ENCODE measurements at regions of chr10 and their contacts with region 1.

Region 1: GRCh38 chr10:62050893-62051433 is 149.5 kb downstream of the ARID5B start:
- DNase-seq: peak; percentile 70
- ATAC-seq: no peak
- H3K4me3 ChIP-seq: peak overlapping the region; percentile 69 to 81 (median 71)
- H3K27ac ChIP-seq: peak overlapping the region; percentile 89
- H3K4me1 ChIP-seq: peaks cover 86% of the 10 kb centered on the region
- H3K27me3 ChIP-seq: no peaks in the 10 kb centered on the region; a peak in 1 of 5 replicates
- CTCF ChIP-seq: no peak
- EP300 ChIP-seq: no peak
- POLR2A ChIP-seq: no peak
- RAD21 ChIP-seq: no peak

Region 2: GRCh38 chr10:61903221-61903927 is 147.6 kb before region 1 on chr10:
- CTCF ChIA-PET with region 1: no interaction called
- POLR2A ChIA-PET with region 1: interaction called, 12 read pairs
- in situ Hi-C with region 1: loop called (anchors 5 kb)
- intact Hi-C with region 1: no loop called
- DNase-seq: peak; percentile 38
- ATAC-seq: peak; percentile 89
- H3K4me3 ChIP-seq: peak overlapping the region; percentile 93 to 96 (median 94)
- H3K27ac ChIP-seq: peak overlapping the region; percentile 94
- H3K4me1 ChIP-seq: peaks cover 51% of the 10 kb centered on the region
- H3K27me3 ChIP-seq: no peaks in the 10 kb centered on the region; a peak in 1 of 5 replicates
- CTCF ChIP-seq: peak; percentile 36; the same call in 1 of the 2 replicates
- EP300 ChIP-seq: no peak
- POLR2A ChIP-seq: peak; percentile 39 to 47; a peak in 2 of 4 replicates
- RAD21 ChIP-seq: peak; percentile 45; the same call in 1 of the 2 replicates

Region 3: GRCh38 chr10:61961278-61961677 is 89.7 kb before region 1 on chr10:
- CTCF ChIA-PET with region 1: no interaction called
- POLR2A ChIA-PET with region 1: interaction called, 10 read pairs
- in situ Hi-C with region 1: no loop called
- intact Hi-C with region 1: loop called (anchors 1 kb)
- DNase-seq: no peak
- ATAC-seq: no peak
- H3K4me3 ChIP-seq: no peak overlapping the region
- H3K27ac ChIP-seq: no peak overlapping the region
- H3K4me1 ChIP-seq: peaks cover 50% of the 10 kb centered on the region
- H3K27me3 ChIP-seq: no peaks in the 10 kb centered on the region
- CTCF ChIP-seq: no peak
- EP300 ChIP-seq: no peak
- POLR2A ChIP-seq: no peak
- RAD21 ChIP-seq: no peak

Region 4: DNA sequence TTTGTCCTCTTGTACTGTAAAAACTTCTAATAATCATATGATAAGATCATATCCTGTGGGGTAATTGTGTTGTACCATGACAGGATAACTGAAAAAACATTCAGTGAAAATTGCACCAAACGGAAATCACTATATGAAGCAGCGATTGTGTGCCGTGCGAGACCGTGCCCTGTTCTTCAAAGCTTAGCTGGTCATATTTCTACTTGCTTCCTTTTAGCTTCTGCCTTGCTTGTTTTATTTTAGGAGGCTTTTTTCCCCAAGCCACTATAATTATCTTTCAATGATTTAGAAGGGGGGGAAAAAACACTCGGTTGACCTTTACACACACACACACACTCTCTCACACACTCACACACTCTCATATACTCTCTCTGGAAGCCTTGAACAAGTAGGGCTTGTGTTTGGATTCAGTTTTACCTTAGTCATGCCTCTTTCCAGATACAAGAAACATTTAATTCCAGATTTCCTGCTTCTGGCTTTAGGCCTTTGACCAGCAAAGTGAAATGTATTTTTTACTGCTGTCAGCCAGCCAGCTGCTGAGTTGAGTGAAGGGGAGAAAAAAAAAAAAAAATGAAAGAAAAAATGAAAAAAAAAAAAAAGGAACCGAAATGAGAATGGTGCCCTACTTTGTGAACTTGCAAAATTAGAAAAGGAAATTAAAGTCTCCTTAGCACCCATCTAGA is 31.9 kb after region 1 on chr10:
- CTCF ChIA-PET with region 1: no interaction called
- POLR2A ChIA-PET with region 1: interaction called, 6 read pairs
- in situ Hi-C with region 1: no loop called
- intact Hi-C with region 1: loop called (anchors 2 kb)
- DNase-seq: peak; percentile 56
- ATAC-seq: peak; percentile 57
- H3K4me3 ChIP-seq: no peak overlapping the region
- H3K27ac ChIP-seq: peak overlapping the region; percentile 74
- H3K4me1 ChIP-seq: peaks cover 51% of the 10 kb centered on the region
- H3K27me3 ChIP-seq: no peaks in the 10 kb centered on the region
- CTCF ChIP-seq: no peak
- EP300 ChIP-seq: peak in 1 of 2 experiments; percentile 2; a peak in 1 of 4 replicates
- POLR2A ChIP-seq: no peak
- RAD21 ChIP-seq: no peak

Region 5: DNA sequence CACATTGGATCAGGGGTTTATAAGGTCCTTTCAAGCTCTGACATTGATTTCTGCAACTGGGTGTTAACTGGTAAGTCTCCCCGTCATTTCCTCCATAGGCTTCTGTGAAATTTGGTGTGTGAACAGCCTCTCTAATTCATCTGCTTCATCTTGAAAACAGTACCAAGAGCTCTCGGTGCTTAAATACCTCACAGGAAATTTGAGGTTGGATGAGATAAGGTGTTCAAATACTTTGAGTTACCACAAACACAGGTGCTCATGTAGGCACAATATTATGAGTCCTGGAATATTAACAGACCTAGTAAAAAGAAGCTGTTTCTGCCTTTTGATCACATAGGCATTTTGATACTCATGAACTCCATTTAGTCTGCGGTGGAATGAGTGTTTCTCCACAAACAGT is 132.5 kb after region 1 on chr10:
- CTCF ChIA-PET with region 1: no interaction called
- POLR2A ChIA-PET with region 1: no interaction called
- in situ Hi-C with region 1: no loop called
- intact Hi-C with region 1: loop called (anchors 5 kb)
- DNase-seq: no peak
- ATAC-seq: peak; percentile 73
- H3K4me3 ChIP-seq: no peak overlapping the region
- H3K27ac ChIP-seq: peak overlapping the region; percentile 58
- H3K4me1 ChIP-seq: peaks cover 15% of the 10 kb centered on the region
- H3K27me3 ChIP-seq: no peaks in the 10 kb centered on the region
- CTCF ChIP-seq: no peak
- EP300 ChIP-seq: no peak
- POLR2A ChIP-seq: no peak
- RAD21 ChIP-seq: no peak

Region 6: DNA sequence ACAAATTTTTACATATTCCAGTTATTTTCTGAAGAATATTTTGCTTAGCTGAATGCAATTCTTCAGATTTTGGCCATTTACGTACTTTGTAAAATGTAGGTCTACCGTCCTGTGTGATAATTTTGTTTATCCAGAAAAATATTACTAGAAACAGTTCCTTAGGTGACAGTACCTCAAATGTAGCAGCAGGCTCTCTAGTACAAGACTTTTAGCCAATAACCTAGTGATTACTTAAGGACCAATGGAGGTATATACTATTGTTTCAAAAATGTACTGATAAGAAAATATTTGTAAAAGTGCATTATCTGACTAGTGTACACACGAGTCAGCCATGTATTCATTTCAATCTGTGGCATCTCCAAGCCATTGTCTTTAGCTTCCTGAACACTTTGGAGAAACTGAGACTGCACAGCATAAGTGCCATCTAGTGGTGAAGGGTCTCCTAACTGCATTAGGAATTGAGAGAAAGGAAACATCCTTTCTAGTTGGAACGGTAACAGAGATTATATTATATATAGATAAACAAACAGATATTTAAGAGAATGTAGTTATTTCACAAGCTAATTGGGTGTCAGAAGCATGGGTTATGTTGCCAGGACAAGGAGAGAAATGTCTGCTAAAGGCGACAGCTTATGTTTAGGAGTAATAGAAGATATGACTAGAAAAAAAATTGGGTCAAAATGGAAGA is 194.0 kb after region 1 on chr10:
- CTCF ChIA-PET with region 1: no interaction called
- POLR2A ChIA-PET with region 1: interaction called, 8 read pairs
- in situ Hi-C with region 1: loop called (anchors 10 kb)
- intact Hi-C with region 1: no loop called
- DNase-seq: peak; percentile 67
- ATAC-seq: peak; percentile 64
- H3K4me3 ChIP-seq: no peak overlapping the region
- H3K27ac ChIP-seq: no peak overlapping the region
- H3K4me1 ChIP-seq: peaks cover 12% of the 10 kb centered on the region
- H3K27me3 ChIP-seq: no peaks in the 10 kb centered on the region
- CTCF ChIP-seq: peak; percentile 84
- EP300 ChIP-seq: no peak; a peak in 1 of 4 replicates
- POLR2A ChIP-seq: no peak
- RAD21 ChIP-seq: peak; percentile 60; the same call in 1 of the 2 replicates